ENCODE measurements at regions of chr20 and their contacts with region 1.

Region 1: GRCh38 chr20:35092524-35093266 is at the start of gene TRPC4AP:
- DNase-seq: peak; percentile 95
- ATAC-seq: peak; percentile 88
- H3K4me3 Mint-ChIP-seq: peak within 1 kb of the TSS; percentile 90
- H3K27ac Mint-ChIP-seq: peak within 1 kb of the TSS; percentile 100
- H3K4me1 Mint-ChIP-seq: peaks cover 52% of the 10 kb centered on the region
- H3K27me3 Mint-ChIP-seq: no peaks in the 10 kb centered on the region
- total RNA-seq, gene TRPC4AP: 36.0 to 39.6 TPM

Region 2: GRCh38 chr20:34111702-34112599 is 980.7 kb before region 1 on chr20 and contains the start of gene EIF2S2:
- CTCF ChIA-PET with region 1: no interaction called
- POLR2A ChIA-PET with region 1: no interaction called
- intact Hi-C with region 1: loop called in 1 of 2 experiments (anchors 5 kb)
- DNase-seq: peak; percentile 97
- ATAC-seq: peak; percentile 88
- H3K4me3 Mint-ChIP-seq: peak within 1 kb of the TSS; percentile 86
- H3K27ac Mint-ChIP-seq: peak within 1 kb of the TSS; percentile 97
- H3K4me1 Mint-ChIP-seq: peaks cover 38% of the 10 kb centered on the region
- H3K27me3 Mint-ChIP-seq: no peaks in the 10 kb centered on the region
- total RNA-seq, gene EIF2S2: 179 to 187 TPM

Region 3: DNA sequence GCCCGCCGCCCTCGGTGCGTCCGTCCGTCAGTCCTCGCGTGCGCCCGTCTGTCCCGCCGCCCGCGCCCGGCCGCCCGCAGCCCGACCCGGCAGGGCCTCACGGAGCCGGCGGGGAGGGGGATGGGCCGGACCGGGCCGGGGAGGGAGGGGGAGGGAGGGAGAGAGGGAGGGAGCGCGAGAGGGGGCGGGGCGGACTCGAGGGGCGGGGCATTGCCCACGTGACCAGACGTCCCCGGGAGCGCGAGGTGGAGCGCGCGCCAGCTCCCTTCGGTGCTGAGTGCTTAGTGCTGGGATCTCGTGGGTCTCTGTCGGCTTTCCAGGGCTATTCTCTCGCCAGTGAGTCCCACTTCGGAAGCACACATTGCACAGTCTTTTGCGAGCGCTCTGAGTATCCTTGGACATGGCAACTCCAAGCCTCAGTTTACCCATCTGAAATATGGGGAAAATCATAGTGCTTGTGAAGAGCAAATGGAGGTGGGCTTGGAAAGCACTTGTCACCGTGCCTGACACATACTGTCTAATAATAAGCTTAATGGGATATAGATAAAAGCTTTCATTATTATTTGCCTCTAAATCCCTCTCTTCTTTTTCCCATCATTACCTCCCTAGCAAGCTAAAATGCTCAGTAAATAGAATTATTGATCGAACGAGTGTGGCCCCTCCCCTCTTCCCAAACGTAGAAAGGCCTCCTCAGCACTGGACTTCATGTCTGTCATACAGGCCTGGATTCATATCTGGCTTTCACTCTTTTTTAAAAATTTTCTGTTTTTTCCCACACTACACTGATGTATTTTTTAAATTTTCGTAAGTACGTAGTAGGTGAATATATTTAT is 266.9 kb before region 1 on chr20 and contains the start of gene NCOA6:
- CTCF ChIA-PET with region 1: no interaction called
- POLR2A ChIA-PET with region 1: no interaction called
- intact Hi-C with region 1: loop called (anchors 1 to 10 kb)
- DNase-seq: peak; percentile 95
- ATAC-seq: peak; percentile 67
- H3K4me3 Mint-ChIP-seq: peak within 1 kb of the TSS; percentile 86
- H3K27ac Mint-ChIP-seq: peak within 1 kb of the TSS; percentile 95
- H3K4me1 Mint-ChIP-seq: peaks cover 30% of the 10 kb centered on the region
- H3K27me3 Mint-ChIP-seq: no peaks in the 10 kb centered on the region
- total RNA-seq, gene NCOA6: 20.3 to 31.1 TPM

Region 4: DNA sequence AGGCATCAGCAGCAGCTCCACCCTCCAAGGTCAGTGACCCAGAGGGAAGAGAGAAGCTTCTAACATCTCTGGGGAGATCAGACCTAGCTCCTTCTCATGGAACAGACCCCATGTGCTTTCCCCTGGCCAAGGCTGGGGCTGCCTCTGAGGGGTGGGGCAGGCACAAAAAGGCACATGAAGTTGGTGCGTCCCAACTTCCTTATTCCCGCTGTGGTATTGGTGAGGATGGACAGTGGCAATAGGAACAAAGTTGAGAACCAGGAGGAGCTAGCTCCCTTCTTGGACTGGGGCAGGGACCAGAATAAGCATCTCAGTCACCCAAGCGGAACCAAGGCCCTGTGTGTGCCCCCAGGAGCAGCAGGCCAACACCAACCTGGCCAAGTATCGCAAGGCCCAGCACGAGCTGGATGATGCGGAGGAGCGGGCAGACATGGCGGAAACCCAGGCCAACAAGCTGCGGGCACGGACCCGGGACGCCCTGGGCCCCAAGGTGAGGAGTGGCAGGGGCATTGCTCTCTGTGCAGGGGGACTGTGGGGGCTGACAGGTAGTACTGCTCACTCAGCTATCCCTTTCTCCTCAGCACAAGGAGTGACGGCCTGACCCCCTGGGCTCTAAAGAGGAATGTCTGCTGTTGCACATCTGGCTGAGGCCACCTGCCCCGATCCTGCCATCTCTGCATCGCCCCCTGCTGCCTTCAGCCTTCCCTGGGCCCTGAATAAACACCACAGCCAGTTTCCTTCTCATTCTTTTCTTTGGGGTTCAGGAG is 90.9 kb before region 1 on chr20:
- CTCF ChIA-PET with region 1: no interaction called
- POLR2A ChIA-PET with region 1: no interaction called
- intact Hi-C with region 1: no loop called
- DNase-seq: peak; percentile 43
- ATAC-seq: no peak
- H3K4me3 Mint-ChIP-seq: no peak overlapping the region
- H3K27ac Mint-ChIP-seq: no peak overlapping the region
- H3K4me1 Mint-ChIP-seq: peaks cover 4% of the 10 kb centered on the region
- H3K27me3 Mint-ChIP-seq: no peaks in the 10 kb centered on the region

Region 5: DNA sequence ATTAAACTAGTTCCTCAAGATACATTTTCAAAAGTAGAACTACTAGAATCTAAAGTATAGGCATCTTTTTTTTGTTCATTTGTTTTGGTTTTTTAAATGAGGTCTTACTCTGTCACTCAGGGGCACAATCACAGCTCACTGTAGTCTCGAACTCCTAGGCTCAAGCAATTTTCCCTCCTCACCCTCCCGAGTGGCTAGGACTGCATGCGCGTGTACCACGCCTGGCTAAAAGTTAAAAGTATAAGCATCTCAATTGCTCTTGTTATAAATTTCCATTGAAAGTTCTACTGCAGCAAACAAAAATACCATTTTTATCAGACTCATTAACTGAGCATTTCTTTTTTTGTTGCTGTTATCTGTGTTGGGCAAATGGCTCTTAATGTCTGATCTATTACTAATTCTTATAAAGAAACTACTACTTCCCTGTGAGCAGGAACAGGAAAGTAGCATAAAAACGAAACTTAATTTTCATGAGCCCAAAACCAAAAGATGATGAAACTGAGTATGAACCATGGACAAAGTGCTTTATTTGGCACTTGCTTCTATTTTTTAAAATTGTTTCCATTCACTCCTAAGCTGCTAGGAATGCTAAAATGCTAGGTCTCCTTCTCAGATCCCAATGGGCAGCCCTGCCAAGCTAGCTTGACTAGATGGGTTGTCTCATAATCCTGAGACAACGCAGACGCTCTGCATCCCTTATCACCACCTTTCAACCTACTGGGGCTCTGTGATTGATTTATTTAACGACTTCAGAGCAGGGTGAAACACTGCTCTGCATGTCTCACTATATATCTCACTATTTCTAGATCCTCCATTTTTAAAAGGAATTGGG is 37.0 kb before region 1 on chr20:
- CTCF ChIA-PET with region 1: interaction called, 3 read pairs
- POLR2A ChIA-PET with region 1: no interaction called
- intact Hi-C with region 1: loop called in 1 of 2 experiments (anchors 5 kb)
- DNase-seq: peak; percentile 11
- ATAC-seq: peak; percentile 81
- H3K4me3 Mint-ChIP-seq: peak overlapping the region; percentile 28
- H3K27ac Mint-ChIP-seq: peak overlapping the region; percentile 82
- H3K4me1 Mint-ChIP-seq: peaks cover 35% of the 10 kb centered on the region
- H3K27me3 Mint-ChIP-seq: no peaks in the 10 kb centered on the region

Region 6: GRCh38 chr20:35269055-35269781 is 176.5 kb after region 1 on chr20:
- CTCF ChIA-PET with region 1: interaction called, 15 read pairs
- POLR2A ChIA-PET with region 1: no interaction called
- intact Hi-C with region 1: no loop called
- DNase-seq: peak; percentile 74
- ATAC-seq: peak; percentile 82
- H3K4me3 Mint-ChIP-seq: no peak overlapping the region
- H3K27ac Mint-ChIP-seq: no peak overlapping the region
- H3K4me1 Mint-ChIP-seq: no peaks in the 10 kb centered on the region
- H3K27me3 Mint-ChIP-seq: no peaks in the 10 kb centered on the region

Region 7: GRCh38 chr20:35329435-35330139 is 236.9 kb after region 1 on chr20:
- CTCF ChIA-PET with region 1: no interaction called
- POLR2A ChIA-PET with region 1: no interaction called
- intact Hi-C with region 1: loop called in 1 of 2 experiments (anchors 5 kb)
- DNase-seq: peak; percentile 83
- ATAC-seq: peak; percentile 82
- H3K4me3 Mint-ChIP-seq: no peak overlapping the region
- H3K27ac Mint-ChIP-seq: peak overlapping the region; percentile 80
- H3K4me1 Mint-ChIP-seq: peaks cover 52% of the 10 kb centered on the region
- H3K27me3 Mint-ChIP-seq: no peaks in the 10 kb centered on the region

Region 8: DNA sequence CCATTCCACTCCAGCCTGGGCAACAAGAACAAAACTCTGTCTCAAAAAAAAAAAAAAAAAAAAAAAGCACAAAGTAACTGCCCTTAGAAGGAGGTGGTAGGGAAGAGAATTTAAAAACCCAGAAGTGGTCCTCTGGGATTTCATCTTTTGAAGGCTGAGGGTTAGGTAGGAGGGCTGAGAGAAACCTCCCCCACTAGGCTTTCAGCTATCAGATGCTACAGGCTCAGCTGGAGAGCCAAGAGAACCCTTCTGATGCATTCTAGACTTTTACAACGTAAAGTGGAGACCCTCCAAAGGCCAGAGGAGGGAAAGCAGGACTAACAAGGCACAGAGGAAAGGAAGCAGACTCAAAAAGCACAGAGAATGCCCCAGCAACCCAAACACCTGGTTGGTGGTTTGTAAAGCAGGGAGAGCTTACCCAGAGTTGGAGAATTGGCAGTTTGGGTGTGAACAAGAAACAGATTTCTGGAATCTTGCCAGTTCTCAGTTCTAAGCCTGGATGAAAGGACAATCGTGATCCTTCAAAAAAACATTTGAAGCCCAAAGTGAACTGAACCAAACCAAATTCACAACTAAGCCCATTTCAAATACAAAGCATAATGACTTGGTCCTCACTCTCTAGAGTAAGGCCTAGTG is 499.8 kb after region 1 on chr20:
- CTCF ChIA-PET with region 1: no interaction called
- POLR2A ChIA-PET with region 1: no interaction called
- intact Hi-C with region 1: no loop called
- DNase-seq: no peak
- ATAC-seq: no peak
- H3K4me3 Mint-ChIP-seq: no peak overlapping the region
- H3K27ac Mint-ChIP-seq: no peak overlapping the region
- H3K4me1 Mint-ChIP-seq: no peaks in the 10 kb centered on the region
- H3K27me3 Mint-ChIP-seq: no peaks in the 10 kb centered on the region

Region 9: DNA sequence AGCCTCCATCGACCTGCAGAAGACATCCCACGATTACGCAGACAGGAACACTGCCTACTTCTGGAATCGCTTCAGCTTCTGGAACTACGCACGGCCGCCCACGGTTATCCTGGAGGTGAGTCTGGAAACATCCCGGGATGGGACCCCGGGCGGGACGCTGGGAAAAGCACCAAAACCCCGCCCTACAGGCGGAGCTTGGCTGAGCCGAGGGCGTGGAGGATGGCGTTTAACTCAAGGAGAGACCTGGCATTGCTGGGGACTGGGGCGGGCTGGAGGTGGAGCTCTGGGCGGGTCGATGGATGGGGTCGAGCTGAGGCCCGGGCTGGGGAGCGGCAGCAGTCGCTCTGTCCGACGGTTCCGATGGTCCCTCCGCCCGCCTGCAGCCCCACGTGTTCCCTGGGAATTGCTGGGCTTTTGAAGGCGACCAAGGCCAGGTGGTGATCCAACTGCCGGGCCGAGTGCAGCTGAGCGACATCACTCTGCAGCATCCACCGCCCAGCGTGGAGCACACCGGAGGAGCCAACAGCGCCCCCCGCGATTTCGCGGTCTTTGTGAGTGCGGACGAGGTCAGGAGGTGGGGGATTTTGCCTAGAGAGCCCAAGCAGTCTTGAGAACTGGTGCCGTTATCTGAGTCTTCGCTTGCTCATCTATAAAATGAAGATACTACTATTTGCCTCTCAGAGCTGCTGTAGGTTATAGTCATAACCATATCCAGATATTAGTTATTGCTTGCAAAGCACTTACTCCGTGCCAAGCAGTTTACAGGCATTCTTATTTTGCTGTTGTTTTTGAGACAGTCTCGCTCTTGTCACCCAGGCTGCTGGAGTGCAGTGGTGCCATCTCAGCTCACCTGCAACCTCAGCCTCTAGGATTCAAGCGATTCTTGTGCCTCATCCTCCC is 526.8 kb after region 1 on chr20:
- CTCF ChIA-PET with region 1: no interaction called
- POLR2A ChIA-PET with region 1: no interaction called
- intact Hi-C with region 1: loop called in 1 of 2 experiments (anchors 1 kb)
- DNase-seq: peak; percentile 93
- ATAC-seq: peak; percentile 51
- H3K4me3 Mint-ChIP-seq: peak overlapping the region; percentile 83
- H3K27ac Mint-ChIP-seq: peak overlapping the region; percentile 92
- H3K4me1 Mint-ChIP-seq: peaks cover 48% of the 10 kb centered on the region
- H3K27me3 Mint-ChIP-seq: peaks cover 2% of the 10 kb centered on the region